ENCODE measurements at regions of chr11 and their contacts with region 1.

Region 1: DNA sequence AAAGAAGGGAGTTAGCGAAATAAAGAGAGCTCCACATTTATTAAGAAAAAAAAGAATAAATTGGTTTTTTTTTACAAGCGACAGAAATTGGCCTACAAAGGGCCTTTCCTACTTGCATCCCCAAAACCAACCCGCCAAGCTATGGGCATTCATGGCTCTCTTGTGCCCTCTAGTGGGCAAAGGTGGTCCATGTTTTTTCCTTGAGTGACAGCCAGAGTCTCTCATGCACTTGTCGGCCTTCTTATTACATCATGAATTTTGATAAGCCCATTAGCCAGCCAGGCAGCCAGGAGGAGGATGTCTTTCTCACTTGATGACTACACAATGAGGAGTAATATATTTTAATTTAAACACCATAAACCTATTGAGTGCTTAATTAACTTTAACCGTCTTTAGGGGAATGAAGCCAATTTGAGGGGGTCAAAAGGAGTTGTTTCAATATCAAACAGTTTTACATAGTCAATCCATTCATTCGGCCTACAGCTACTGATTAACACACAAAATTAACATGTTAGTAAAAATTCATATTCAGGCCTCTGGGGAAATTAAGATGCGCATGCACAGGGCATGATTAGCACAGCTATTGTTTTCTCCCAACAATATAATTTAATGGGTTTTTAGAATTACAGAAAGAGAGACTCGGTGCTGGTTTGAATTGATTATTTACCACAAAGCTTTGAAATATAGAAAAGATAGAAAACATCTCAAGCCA is 85.5 kb downstream of the RCN1 start:
- DNase-seq: peak in 1 of 2 donors; percentile 86
- H3K4me3 ChIP-seq: no peak overlapping the region
- H3K27ac ChIP-seq: no peak overlapping the region
- H3K4me1 ChIP-seq: no peaks in the 10 kb centered on the region
- H3K27me3 ChIP-seq: no peaks in the 10 kb centered on the region
- CTCF ChIP-seq: peak; percentile 57 to 91 (median 87)

Region 2: DNA sequence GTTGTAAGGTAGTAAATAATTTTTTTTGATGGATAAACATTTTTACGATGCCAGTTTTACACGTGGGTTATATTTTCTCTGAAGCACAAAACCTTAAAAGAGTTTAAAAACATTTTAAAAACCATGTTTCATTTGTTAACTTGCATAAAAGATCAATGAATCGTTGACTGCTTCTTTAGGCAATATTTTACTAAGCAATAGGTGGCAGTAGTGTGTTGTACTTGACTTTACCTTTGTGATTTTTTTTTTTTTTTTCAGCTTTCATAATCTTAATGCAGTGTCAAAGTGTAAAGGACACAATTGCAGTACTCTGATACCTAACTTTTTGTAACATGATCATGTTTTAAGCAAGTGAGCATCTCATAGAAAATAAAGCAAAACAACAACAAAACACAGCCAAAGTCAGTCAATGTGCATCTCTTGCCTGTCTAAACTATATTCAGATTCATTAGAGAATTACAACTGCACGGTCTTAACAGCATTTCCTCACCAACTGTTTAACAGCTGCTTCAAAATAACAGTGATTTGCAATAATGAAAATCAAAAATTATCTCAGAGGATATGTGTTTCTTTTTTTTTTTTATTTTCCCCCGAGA is 779.0 kb before region 1 on chr11:
- intact Hi-C with region 1: loop called (anchors 10 kb)
- DNase-seq: no peak
- H3K4me3 ChIP-seq: no peak overlapping the region
- H3K27ac ChIP-seq: no peak overlapping the region
- H3K4me1 ChIP-seq: no peaks in the 10 kb centered on the region
- H3K27me3 ChIP-seq: no peaks in the 10 kb centered on the region
- CTCF ChIP-seq: peak in 2 of 3 experiments; percentile 26 to 39

Region 3: DNA sequence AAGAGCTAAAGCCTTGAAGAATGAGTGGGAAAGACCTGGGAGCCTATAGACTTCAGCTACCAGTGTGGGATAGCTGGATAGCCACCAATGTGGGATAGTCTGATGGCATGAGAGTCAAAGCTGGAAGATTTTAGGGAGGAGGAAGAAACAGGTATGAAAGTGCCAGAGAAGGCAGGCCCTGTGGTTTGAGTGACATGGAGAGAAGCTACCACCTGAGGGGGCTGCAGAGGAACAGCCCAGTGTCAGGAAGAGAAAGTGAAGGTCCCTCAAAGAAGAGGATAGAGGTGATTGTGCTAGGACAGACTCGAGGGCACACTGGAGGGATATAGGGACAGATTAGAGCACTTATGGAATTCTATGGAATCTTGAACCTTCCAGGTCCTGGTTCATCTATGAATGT is 342.1 kb before region 1 on chr11:
- intact Hi-C with region 1: no loop called
- DNase-seq: no peak
- H3K4me3 ChIP-seq: no peak overlapping the region
- H3K27ac ChIP-seq: no peak overlapping the region
- H3K4me1 ChIP-seq: no peaks in the 10 kb centered on the region
- H3K27me3 ChIP-seq: no peaks in the 10 kb centered on the region
- CTCF ChIP-seq: no peak

Region 4: DNA sequence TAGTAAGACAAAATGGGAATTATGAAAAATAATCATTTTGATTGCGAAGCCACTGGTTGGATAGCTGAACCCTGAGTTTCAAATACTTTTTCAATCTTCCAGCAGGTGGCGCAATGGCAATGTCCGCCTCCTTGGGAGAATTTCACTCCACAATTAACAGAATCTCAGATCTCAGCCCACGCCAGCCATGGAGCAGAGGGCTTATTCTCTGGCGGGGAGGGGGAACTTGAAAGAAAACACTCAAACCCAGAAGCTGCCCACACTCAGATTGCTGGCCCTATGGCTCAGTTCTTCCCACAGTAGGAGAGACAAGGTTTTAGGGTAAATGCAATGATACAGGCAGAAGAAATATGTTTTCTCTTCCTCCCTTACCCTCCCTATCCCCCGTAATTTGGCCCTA is 124.2 kb before region 1 on chr11:
- intact Hi-C with region 1: loop called (anchors 1 kb)
- DNase-seq: peak in 1 of 2 donors; percentile 69
- H3K4me3 ChIP-seq: no peak overlapping the region
- H3K27ac ChIP-seq: no peak overlapping the region
- H3K4me1 ChIP-seq: no peaks in the 10 kb centered on the region
- H3K27me3 ChIP-seq: no peaks in the 10 kb centered on the region
- CTCF ChIP-seq: peak; percentile 47 to 80 (median 73)

Measured in ascending aorta (tissue), 2 donors.